ENCODE measurements at regions of chr16 and their contacts with region 1.

Region 1: DNA sequence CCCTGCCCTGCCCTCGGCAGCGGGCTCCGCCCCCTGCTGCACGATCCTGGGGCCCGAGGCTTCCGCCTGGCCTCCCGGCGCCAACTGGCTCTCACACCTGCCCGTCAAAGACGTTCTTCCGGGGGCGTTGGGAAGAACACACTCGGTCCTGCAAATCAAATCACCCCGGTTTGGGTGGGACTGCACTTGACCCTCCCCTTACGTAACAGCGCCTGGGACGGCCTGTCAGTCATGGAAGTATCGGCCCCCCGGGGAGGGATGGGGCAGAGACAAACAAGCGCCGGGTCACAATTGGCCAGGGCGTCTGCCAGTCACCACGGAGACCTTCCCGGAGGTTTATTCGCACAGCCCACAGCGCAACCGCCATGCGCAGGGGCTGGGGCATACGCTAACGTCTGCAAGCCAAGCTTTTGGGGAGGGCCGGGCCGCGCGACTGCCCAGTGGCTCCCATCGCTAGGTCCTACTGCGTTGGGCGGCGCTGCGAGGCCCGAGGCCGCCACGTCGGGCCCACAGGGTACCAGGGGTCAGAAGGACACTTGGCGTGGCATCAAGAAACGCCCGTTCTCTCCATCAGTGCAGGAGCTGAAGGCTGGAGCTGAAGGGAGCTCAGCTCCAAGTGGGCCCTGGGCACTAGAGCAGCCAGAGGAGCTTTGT is 388 bp upstream of the AKTIP start:
- DNase-seq: peak; percentile 99 to 100 (median 99)
- ATAC-seq: peak; percentile 89
- H3K4me3 ChIP-seq: peak overlapping the region; percentile 74 to 78
- H3K4me3 Mint-ChIP-seq: peak overlapping the region; percentile 92
- H3K27ac ChIP-seq: peak overlapping the region; percentile 77 to 88
- H3K27ac Mint-ChIP-seq: peak overlapping the region; percentile 97
- H3K4me1 ChIP-seq: peaks cover 41% of the 10 kb centered on the region
- H3K4me1 Mint-ChIP-seq: peaks cover 48% of the 10 kb centered on the region
- H3K27me3 ChIP-seq: no peaks in the 10 kb centered on the region
- H3K27me3 Mint-ChIP-seq: no peaks in the 10 kb centered on the region
- CTCF ChIP-seq: no peak

Region 2: GRCh38 chr16:53372992-53373871 is 130.2 kb before region 1 on chr16:
- CTCF ChIA-PET with region 1: interaction called, 4 read pairs
- POLR2A ChIA-PET with region 1: no interaction called
- intact Hi-C with region 1: loop called (anchors 2 to 5 kb)
- DNase-seq: peak; percentile 60 to 88 (median 77)
- ATAC-seq: peak; percentile 96
- H3K4me3 ChIP-seq: peak overlapping the region; percentile 54 to 84
- H3K4me3 Mint-ChIP-seq: no peak overlapping the region
- H3K27ac ChIP-seq: peak overlapping the region in 1 of 2 experiments; percentile 35
- H3K27ac Mint-ChIP-seq: peak overlapping the region; percentile 78
- H3K4me1 ChIP-seq: peaks cover 7% of the 10 kb centered on the region
- H3K4me1 Mint-ChIP-seq: peaks cover 33% of the 10 kb centered on the region
- H3K27me3 ChIP-seq: peaks cover 0 to 3% of the 10 kb centered on the region in 2 experiments
- H3K27me3 Mint-ChIP-seq: peaks cover 6% of the 10 kb centered on the region
- CTCF ChIP-seq: no peak

Region 3: GRCh38 chr16:53457670-53458069 is 45.7 kb before region 1 on chr16:
- CTCF ChIA-PET with region 1: interaction called, 6 read pairs
- POLR2A ChIA-PET with region 1: interaction called, 53 read pairs
- intact Hi-C with region 1: loop called (anchors 1 to 2 kb)
- DNase-seq: peak; percentile 46 to 96 (median 76)
- ATAC-seq: peak; percentile 70
- H3K4me3 ChIP-seq: peak overlapping the region; percentile 42 to 49
- H3K4me3 Mint-ChIP-seq: peak overlapping the region; percentile 76
- H3K27ac ChIP-seq: peak overlapping the region; percentile 65 to 72
- H3K27ac Mint-ChIP-seq: peak overlapping the region; percentile 94
- H3K4me1 ChIP-seq: peaks cover 90% of the 10 kb centered on the region
- H3K4me1 Mint-ChIP-seq: peaks cover 92% of the 10 kb centered on the region
- H3K27me3 ChIP-seq: no peaks in the 10 kb centered on the region
- H3K27me3 Mint-ChIP-seq: no peaks in the 10 kb centered on the region
- CTCF ChIP-seq: no peak

Region 4: DNA sequence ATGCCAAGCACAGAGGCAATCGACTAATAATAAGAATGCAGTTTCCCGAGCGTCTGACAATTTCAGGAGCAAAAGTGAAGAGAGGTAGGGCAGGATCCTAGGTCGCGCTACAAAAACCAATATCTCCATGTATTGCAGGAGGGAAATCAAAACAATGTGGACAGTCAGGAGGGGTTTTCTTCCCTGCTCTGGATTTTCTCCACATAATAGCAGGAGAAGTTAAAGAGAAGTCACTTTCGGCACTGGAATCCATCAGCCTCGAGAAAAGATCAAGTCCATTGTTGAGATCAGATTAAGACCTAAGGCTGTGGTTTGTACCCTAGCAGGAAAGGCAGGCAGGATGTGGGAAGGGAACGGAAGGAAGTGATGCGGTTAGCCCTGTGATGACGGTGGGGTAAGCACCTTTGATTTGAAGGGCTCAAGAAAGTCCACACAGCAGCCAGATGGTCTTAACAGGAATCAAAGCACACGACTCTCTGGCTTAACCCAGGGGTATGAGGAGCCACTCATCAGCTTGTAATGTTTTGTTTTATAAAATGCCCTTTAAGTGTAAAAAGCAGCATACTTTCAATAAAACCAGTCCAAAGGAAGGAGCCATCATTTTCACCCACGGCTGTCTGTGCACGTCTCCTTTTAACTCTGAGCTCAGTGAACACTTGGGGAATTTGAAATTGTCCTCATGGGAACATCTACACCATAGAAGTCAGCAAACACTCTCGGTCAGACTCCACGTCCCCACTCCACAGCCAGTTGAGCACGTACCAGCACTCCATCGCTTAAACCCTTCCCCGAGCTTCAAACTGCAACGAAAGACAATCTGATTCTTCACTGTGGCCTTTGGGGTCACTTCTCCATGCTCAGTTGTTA is 15.4 kb after region 1 on chr16:
- CTCF ChIA-PET with region 1: interaction called, 4 read pairs
- POLR2A ChIA-PET with region 1: interaction called, 7 read pairs
- intact Hi-C with region 1: loop called in 1 of 2 experiments (anchors 2 kb)
- DNase-seq: peak; percentile 45 to 93 (median 79)
- ATAC-seq: peak; percentile 78
- H3K4me3 ChIP-seq: peak overlapping the region; percentile 26 to 55
- H3K4me3 Mint-ChIP-seq: peak overlapping the region; percentile 80
- H3K27ac ChIP-seq: peak overlapping the region; percentile 1 to 91
- H3K27ac Mint-ChIP-seq: peak overlapping the region; percentile 91
- H3K4me1 ChIP-seq: peaks cover 42% of the 10 kb centered on the region
- H3K4me1 Mint-ChIP-seq: peaks cover 56% of the 10 kb centered on the region
- H3K27me3 ChIP-seq: no peaks in the 10 kb centered on the region
- H3K27me3 Mint-ChIP-seq: peaks cover 13% of the 10 kb centered on the region
- CTCF ChIP-seq: no peak

Region 5: GRCh38 chr16:53534206-53534605 is 30.8 kb after region 1 on chr16:
- CTCF ChIA-PET with region 1: no interaction called
- POLR2A ChIA-PET with region 1: no interaction called
- intact Hi-C with region 1: no loop called
- DNase-seq: no peak
- ATAC-seq: no peak
- H3K4me3 ChIP-seq: no peak overlapping the region
- H3K4me3 Mint-ChIP-seq: no peak overlapping the region
- H3K27ac ChIP-seq: no peak overlapping the region
- H3K27ac Mint-ChIP-seq: no peak overlapping the region
- H3K4me1 ChIP-seq: no peaks in the 10 kb centered on the region
- H3K4me1 Mint-ChIP-seq: peaks cover 19% of the 10 kb centered on the region
- H3K27me3 ChIP-seq: no peaks in the 10 kb centered on the region
- H3K27me3 Mint-ChIP-seq: peaks cover 3% of the 10 kb centered on the region
- CTCF ChIP-seq: no peak

Region 6: DNA sequence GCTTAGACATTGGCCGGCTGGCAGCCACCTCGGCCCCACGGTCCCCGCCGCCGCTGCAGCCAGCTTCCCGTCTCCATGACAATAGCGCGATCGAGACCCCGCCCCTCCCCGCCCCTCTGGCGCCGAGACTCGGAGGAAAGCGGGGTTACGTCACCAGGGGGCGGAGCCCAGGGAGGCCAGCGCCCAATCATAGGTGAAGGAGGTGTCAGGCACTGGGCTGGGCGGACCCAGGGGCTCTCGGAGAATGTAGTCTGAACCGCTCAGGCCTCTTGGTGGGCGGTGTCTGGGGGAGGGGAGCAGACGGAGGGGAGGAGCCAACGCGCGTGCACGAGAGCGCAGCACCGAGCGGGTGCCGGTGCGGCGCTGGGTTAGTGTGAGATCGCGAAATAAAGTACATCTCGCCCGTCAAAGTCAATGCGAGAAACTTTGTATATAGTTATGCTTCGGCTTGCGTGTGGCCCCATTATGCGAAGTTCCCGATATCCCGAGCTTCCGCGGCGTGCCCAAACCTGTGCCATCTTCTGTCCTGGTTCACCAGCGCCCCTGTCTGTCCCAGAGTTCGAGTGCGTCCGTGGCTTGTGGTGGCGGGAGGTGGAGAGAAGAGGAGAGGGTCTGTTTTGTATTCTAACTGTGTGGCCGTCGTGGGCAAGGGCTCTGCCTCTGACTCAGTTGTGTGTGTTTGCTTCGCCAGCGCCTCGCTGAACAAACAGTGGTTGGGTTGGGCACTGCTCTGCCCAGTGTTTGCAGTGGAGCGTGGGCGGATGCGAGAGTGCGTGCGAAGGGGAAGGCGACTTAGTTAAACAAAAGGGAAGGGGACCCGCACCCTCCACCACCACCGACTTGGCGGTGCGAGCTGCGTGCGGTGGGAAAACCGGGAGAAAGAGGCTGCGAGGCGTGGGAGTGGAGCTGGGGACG is 1426.0 kb after region 1 on chr16:
- CTCF ChIA-PET with region 1: no interaction called
- POLR2A ChIA-PET with region 1: no interaction called
- intact Hi-C with region 1: loop called in 1 of 2 experiments (anchors 10 kb)
- DNase-seq: peak; percentile 82 to 95 (median 91)
- ATAC-seq: peak; percentile 96
- H3K4me3 ChIP-seq: peak overlapping the region; percentile 46 to 48
- H3K4me3 Mint-ChIP-seq: peak overlapping the region; percentile 90
- H3K27ac ChIP-seq: no peak overlapping the region
- H3K27ac Mint-ChIP-seq: peak overlapping the region; percentile 64
- H3K4me1 ChIP-seq: peaks cover 28% of the 10 kb centered on the region
- H3K4me1 Mint-ChIP-seq: peaks cover 33% of the 10 kb centered on the region
- H3K27me3 ChIP-seq: peaks cover 38 to 51% of the 10 kb centered on the region in 2 experiments
- H3K27me3 Mint-ChIP-seq: peaks cover 61% of the 10 kb centered on the region
- CTCF ChIP-seq: no peak